Activated CD8-positive, alpha-beta memory T cell treated with anti-CD3 and anti-CD28 coated beads, Interleukin-2, amount 10 ng/mL, durations not matched to agents 7 days and 5 days (primary cell): ENCODE measurements at regions of chr3 and their contacts with region 1.

Region 1: GRCh38 chr3:128095222-128095703 is 28.3 kb downstream of the RUVBL1 start:
- DNase-seq: peak; percentile 87
- ATAC-seq: peak; percentile 99
- H3K4me3 Mint-ChIP-seq: no peak overlapping the region
- H3K27ac Mint-ChIP-seq: peak overlapping the region; percentile 69
- H3K4me1 Mint-ChIP-seq: peaks cover 24% of the 10 kb centered on the region
- H3K27me3 Mint-ChIP-seq: no peaks in the 10 kb centered on the region

Region 2: GRCh38 chr3:128084391-128084963 is 10.8 kb before region 1 on chr3:
- CTCF ChIA-PET with region 1: interaction called, 10 read pairs
- DNase-seq: no peak
- ATAC-seq: no peak
- H3K4me3 Mint-ChIP-seq: no peak overlapping the region
- H3K27ac Mint-ChIP-seq: no peak overlapping the region
- H3K4me1 Mint-ChIP-seq: peaks cover 7% of the 10 kb centered on the region
- H3K27me3 Mint-ChIP-seq: no peaks in the 10 kb centered on the region

Region 3: DNA sequence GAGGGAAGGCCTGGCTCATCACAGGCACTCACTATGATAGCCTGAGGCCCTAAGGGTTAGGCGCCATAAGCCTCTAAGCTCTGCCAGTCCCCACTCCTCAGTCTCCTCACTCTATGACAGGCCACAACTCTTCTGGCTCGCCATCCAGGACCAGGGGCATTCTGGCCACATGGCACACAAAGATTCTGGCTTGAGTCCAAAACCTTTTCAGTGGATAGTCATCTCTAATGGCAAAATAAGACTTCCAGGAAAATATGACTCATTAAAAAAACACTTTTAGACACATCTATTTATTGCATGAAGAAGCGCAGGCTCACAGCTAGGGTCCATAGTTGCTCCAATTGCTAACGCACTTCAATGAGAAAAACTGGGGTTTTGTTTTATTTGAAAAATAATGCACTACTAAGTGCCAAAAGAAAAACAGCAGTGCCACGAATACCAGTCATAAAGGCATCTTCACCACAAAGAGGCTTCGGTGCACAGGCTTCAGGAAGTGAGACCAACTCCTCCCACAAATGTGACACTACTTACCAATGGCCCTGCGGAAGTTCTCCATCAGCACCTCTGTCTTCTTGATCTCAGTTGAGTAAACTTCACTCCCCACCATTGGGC is 17.2 kb after region 1 on chr3:
- CTCF ChIA-PET with region 1: interaction called, 18 read pairs
- DNase-seq: peak; percentile 82
- ATAC-seq: peak; percentile 88
- H3K4me3 Mint-ChIP-seq: peak overlapping the region; percentile 41
- H3K27ac Mint-ChIP-seq: peak overlapping the region; percentile 97
- H3K4me1 Mint-ChIP-seq: peaks cover 40% of the 10 kb centered on the region
- H3K27me3 Mint-ChIP-seq: no peaks in the 10 kb centered on the region

Region 4: DNA sequence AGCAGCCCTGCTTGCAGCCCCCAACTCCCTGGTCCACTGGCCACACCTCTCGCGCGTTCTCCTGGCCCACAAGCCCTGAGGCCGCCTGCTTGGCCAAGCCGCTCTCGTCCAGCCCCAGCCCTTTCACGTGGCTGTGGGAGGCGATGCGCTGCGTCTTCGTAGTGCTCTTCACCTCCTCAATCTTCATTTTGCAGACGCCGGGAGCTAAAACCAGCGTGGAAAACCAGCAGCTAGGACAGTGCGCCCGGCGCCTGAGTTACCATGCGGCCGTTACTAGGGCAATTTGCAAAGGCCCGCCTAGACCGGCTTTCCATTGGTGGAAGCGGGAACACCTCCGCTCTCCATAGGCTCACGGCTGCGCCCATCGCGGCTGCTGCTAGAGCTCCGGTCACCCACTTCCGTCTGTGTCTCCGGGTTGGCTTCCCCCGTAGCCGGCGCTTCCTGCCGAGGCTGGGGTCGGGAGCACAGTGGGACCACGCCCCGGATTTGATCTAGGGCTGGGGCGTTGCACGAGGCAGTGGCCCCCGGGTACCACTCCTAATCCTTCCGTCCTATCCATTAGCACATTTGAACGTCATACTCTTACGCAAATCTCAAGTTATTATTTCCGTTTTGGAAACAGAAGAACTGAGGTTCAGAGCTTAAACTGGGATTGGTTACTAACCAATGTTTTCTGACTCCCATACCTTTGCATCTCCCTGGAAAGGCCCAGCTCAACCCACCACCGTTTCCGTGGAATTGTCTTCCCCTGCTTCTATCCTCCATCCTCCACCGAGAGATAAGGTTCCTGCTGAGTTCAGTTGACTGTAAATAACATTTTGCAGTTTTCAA is 28.5 kb after region 1 on chr3 and contains the start of gene RUVBL1:
- CTCF ChIA-PET with region 1: interaction called, 25 read pairs
- DNase-seq: peak; percentile 99
- ATAC-seq: peak; percentile 99
- H3K4me3 Mint-ChIP-seq: peak within 1 kb of the TSS; percentile 98
- H3K27ac Mint-ChIP-seq: peak within 1 kb of the TSS; percentile 94
- H3K4me1 Mint-ChIP-seq: peaks cover 23% of the 10 kb centered on the region
- H3K27me3 Mint-ChIP-seq: peaks cover under 1% of the 10 kb centered on the region
- total RNA-seq, gene RUVBL1: 63.8 to 73.5 TPM

Region 5: DNA sequence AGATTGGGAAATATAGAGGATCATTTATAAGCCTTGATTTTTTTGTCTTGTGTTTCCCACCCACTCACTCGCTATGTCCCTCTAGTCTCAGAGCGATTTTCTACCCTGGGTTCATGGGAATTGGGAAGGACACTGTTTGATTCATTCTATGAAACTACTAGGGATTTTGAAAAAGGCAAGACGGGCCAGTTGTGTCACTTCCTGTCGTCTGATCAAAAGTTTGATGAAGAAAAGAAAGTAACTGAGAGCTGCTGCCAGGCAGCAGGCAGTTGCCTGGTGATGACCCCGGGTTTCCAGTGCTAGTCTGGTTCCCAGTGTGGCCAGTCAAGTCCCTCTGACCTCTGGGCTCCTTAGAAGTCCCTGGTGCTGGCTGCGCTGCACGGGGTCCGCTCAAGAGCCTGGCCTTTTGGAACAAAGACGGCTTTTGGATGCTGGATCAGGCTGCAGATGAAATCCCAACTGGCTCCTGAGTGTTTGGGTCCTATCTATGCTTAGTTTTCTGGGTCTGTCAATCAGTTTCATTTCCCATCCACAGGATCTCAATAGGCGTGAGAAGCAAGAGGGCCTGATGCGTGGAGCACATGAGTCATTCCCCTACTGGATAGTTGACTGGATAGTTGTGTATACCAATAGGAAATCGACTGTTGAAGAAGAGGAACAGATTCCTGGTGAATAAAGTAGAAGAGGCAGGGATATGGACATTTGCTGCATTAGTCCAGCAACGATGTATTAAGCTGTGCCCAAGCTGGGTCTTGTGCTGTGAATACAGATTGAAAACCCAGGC is 147.7 kb after region 1 on chr3:
- CTCF ChIA-PET with region 1: no interaction called
- DNase-seq: peak; percentile 51
- ATAC-seq: peak; percentile 75
- H3K4me3 Mint-ChIP-seq: no peak overlapping the region
- H3K27ac Mint-ChIP-seq: peak overlapping the region; percentile 78
- H3K4me1 Mint-ChIP-seq: peaks cover 7% of the 10 kb centered on the region
- H3K27me3 Mint-ChIP-seq: no peaks in the 10 kb centered on the region

Region 6: DNA sequence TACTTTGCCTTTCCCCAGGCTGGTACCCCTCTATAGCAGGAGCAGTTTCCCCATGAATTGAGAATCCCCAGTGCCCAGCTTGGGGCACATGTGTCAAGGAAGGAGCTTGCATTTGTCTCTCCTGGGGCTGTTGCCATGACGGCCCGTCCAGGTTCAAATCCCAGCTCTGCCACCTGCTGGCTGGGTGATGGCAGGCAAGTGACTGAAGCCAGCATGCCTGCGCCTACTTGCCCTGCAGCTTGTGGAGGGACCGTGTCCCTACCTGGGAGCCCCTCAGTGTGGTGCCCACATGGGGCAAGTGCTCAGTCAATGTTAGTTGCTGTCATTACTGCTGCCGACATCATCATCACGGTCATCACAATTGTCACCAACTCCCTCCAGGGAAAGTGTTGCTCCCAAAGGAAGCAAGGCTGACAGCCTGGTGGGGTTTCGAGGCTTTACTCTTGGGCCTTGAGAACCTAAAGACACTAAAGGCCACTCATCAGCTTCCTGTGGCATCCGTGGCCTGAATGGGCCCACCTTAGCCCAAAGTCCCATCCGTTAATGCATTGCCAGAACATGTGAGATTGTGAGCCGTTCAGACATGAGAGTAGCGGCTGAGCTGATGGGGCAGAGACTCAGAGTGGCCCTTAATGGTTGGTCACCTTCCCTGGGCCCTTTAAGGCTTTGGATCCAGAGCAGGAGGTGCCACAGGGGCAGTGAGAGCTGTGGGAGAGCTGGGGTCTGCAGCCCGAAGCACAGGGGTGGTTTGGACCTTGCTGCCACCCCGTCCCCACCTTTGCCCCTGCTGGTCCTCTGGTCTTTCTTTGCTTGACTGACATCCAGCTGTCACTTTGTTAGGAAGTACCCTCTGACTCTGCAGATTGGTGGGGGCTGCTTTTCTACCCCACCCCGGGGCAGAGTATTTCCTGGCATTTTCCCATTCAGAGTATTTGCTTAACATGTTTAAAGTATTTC is 227.1 kb after region 1 on chr3:
- CTCF ChIA-PET with region 1: interaction called, 15 read pairs
- DNase-seq: peak; percentile 61
- ATAC-seq: no peak
- H3K4me3 Mint-ChIP-seq: no peak overlapping the region
- H3K27ac Mint-ChIP-seq: no peak overlapping the region
- H3K4me1 Mint-ChIP-seq: peaks cover 15% of the 10 kb centered on the region
- H3K27me3 Mint-ChIP-seq: no peaks in the 10 kb centered on the region